ENCODE measurements at regions of chr12 and their contacts with region 1.

Region 1: GRCh38 chr12:5022465-5023061 is 21.1 kb upstream of the KCNA5 start:
- DNase-seq: no peak
- H3K4me3 ChIP-seq: no peak overlapping the region
- H3K27me3 ChIP-seq: peaks cover 7% of the 10 kb centered on the region
- CTCF ChIP-seq: peak; percentile 93

Region 2: GRCh38 chr12:4899364-4899763 is 123.2 kb before region 1 on chr12:
- CTCF ChIA-PET with region 1: no interaction called
- POLR2A ChIA-PET with region 1: no interaction called
- DNase-seq: no peak
- H3K4me3 ChIP-seq: no peak overlapping the region
- H3K27me3 ChIP-seq: no peaks in the 10 kb centered on the region
- CTCF ChIP-seq: no peak

Region 3: GRCh38 chr12:4996714-4997113 is 25.8 kb before region 1 on chr12:
- CTCF ChIA-PET with region 1: no interaction called
- POLR2A ChIA-PET with region 1: no interaction called
- DNase-seq: no peak
- H3K4me3 ChIP-seq: no peak overlapping the region
- H3K27me3 ChIP-seq: peaks cover 3% of the 10 kb centered on the region
- CTCF ChIP-seq: no peak

Region 4: DNA sequence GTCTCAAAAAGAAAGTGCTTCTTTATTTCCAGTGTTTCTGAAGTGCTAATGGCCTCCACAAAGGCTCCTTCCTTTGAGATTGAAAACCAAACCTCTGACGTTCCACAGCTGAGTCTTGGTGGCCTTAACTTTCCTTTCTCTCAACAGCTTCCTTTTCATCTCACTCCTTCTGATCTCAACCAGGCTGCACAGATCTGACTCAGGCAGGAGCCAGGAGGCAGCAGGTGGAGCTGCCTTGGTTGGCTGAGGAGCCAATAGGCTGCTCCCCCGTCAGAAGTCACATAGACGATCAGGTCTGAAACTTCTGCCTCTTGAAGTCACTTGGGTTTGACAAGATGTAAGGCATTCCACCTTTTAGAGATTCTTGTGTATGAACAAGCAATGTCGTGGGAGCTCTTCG is 12.0 kb after region 1 on chr12:
- CTCF ChIA-PET with region 1: interaction called, 37 read pairs
- POLR2A ChIA-PET with region 1: no interaction called
- DNase-seq: no peak
- H3K4me3 ChIP-seq: no peak overlapping the region
- H3K27me3 ChIP-seq: no peaks in the 10 kb centered on the region; the same call in none of the 2 replicates
- CTCF ChIP-seq: no peak

Region 5: GRCh38 chr12:5040368-5040767 is 17.8 kb after region 1 on chr12:
- CTCF ChIA-PET with region 1: interaction called, 37 read pairs
- POLR2A ChIA-PET with region 1: no interaction called
- DNase-seq: no peak
- H3K4me3 ChIP-seq: no peak overlapping the region
- H3K27me3 ChIP-seq: peaks cover 12% of the 10 kb centered on the region
- CTCF ChIP-seq: no peak

Region 6: GRCh38 chr12:5068126-5068525 is 45.6 kb after region 1 on chr12:
- CTCF ChIA-PET with region 1: interaction called, 12 read pairs
- POLR2A ChIA-PET with region 1: no interaction called
- DNase-seq: no peak
- H3K4me3 ChIP-seq: no peak overlapping the region
- H3K27me3 ChIP-seq: peaks cover 4% of the 10 kb centered on the region
- CTCF ChIP-seq: no peak

Region 7: DNA sequence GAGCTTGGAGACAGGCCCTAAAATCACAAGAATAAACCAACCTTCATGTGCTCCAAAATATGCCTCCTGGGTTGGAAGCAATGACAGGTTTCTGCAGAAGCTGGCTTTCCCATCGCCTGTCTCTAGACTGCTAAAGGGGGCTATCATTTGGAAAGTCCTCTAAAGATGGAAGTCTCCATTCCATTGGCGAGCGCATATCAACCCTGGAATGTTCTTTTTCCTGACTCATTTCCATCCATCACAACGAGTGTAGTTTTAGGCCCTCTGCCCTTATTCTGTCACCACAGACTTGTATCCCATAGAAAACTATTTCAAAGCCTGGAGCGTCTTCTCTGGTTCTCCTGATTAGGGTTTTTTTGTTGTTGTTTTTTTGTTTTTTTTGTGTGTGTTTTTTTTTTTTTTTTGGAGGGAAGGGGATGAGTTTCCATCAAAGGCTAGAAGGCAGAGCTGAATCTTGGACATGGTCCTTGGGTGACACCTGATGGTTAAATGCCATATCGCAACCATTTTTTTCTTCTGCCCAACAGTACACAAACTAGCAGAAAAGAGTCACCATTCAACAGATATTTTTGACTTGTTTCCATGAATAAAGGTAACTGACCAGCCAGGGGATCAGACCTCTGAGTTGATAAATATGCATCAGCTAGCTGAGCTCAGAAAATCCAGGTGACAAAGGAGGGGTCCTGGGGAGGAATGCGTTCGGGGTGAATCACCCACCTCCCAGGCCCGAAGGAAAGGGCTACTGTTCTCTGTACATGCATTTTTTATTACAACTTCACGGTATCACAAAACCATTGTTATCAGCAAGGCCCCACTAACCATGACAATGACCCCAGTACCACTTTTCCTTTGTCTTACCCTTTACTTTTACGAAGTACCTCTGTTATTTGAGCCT is 61.6 kb after region 1 on chr12:
- CTCF ChIA-PET with region 1: interaction called, 174 read pairs
- POLR2A ChIA-PET with region 1: no interaction called
- DNase-seq: peak; percentile 10
- H3K4me3 ChIP-seq: no peak overlapping the region
- H3K27me3 ChIP-seq: peaks cover 3% of the 10 kb centered on the region; the same call in 1 of the 2 replicates
- CTCF ChIP-seq: peak; percentile 70